Heart right ventricle (tissue), 16 donors: ENCODE measurements at regions of chr2 and their contacts with region 1.

Region 1: GRCh38 chr2:38159597-38159996 is 83.6 kb upstream of the CYP1B1 start:
- DNase-seq: peak in 1 of 2 donors; percentile 51
- ATAC-seq: peak; percentile 34 to 86 (median 76)
- H3K4me3 ChIP-seq: no peak overlapping the region
- H3K27ac ChIP-seq: peak overlapping the region in 9 of 10 donors; percentile 17 to 85 (median 70)
- H3K4me1 ChIP-seq: peaks cover 0 to 42% (median 19%) of the 10 kb centered on the region in 9 donors
- H3K27me3 ChIP-seq: peaks cover 0 to 2% (median 0%) of the 10 kb centered on the region in 7 donors
- CTCF ChIP-seq: no peak

Region 2: DNA sequence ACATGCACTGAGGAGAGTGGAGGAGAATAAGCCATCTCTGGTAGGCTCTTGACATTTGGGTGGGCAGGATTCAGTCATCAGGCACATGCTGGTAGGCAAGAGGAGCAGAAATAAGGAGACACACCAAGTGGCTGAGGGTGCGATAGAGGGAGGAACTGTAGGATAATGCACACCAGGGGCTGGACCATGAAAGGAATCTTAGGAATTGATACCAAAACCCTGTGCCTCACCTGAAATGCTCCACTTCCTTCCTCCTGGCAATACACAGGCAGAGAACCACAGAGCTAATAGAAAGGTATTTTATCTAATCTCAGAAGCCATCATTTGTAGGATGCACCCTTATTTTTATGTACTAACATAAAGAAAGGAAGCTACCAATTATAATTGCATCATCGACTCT is 79.3 kb before region 1 on chr2:
- intact Hi-C with region 1: no loop called
- DNase-seq: no peak
- ATAC-seq: no peak
- H3K4me3 ChIP-seq: no peak overlapping the region
- H3K27ac ChIP-seq: no peak overlapping the region
- H3K4me1 ChIP-seq: peaks cover 2 to 31% (median 21%) of the 10 kb centered on the region in 9 donors
- H3K27me3 ChIP-seq: peaks cover 0 to 34% (median 19%) of the 10 kb centered on the region in 7 donors
- CTCF ChIP-seq: no peak

Region 3: GRCh38 chr2:38125842-38126241 is 33.8 kb before region 1 on chr2:
- intact Hi-C with region 1: loop called in 1 of 10 experiments (anchors 1 kb)
- DNase-seq: no peak
- ATAC-seq: no peak
- H3K4me3 ChIP-seq: no peak overlapping the region
- H3K27ac ChIP-seq: peak overlapping the region in 1 of 10 donors; percentile 1
- H3K4me1 ChIP-seq: peaks cover 0 to 66% (median 21%) of the 10 kb centered on the region in 9 donors
- H3K27me3 ChIP-seq: no peaks in the 10 kb centered on the region
- CTCF ChIP-seq: no peak